IMR-90 (cell line): ENCODE measurements at regions of chr1 and their contacts with region 1.

Region 1: DNA sequence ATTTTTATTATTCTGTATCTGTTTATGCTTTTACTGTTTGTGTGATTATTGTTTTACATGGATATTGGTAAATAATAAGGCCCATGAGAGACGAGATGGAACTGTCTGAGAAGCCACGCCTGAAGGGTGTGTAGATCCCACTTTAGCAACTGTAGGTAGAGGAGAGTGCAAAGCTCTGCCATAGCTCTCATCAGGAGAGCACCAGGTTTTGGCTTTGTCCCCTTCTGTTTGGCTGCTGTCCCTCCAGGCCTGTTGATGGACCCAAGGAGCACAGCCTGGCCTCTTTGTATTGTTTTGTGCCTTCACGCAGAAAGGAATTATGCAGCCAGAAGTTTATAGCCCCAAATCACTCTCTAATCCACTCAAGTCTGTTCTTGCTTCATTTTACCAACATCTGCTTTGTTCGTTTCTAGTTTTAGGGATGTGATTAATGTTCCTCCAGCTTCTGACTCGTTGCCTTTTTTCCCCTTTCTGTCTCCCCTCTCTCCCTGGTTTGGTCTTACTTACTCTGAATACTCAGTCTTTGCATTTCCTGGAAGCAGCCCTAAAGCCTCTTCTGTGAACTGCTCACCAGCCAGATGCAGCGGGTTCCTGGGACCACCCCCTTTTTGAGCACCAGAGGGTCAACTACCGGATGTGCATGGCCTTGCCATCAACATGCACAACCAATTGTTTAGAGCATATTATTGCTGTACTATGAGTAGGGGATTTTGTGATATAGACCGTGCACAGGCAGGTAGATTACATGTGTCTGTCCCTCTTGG is 127.3 kb downstream of the HHAT start:
- DNase-seq: no peak
- ATAC-seq: no peak
- H3K4me3 ChIP-seq: no peak overlapping the region
- H3K27ac ChIP-seq: no peak overlapping the region
- H3K4me1 ChIP-seq: no peaks in the 10 kb centered on the region
- H3K27me3 ChIP-seq: peaks cover 2% of the 10 kb centered on the region; the same call in 1 of the 2 replicates
- CTCF ChIP-seq: no peak
- POLR2A ChIP-seq: no peak
- RAD21 ChIP-seq: no peak

Region 2: DNA sequence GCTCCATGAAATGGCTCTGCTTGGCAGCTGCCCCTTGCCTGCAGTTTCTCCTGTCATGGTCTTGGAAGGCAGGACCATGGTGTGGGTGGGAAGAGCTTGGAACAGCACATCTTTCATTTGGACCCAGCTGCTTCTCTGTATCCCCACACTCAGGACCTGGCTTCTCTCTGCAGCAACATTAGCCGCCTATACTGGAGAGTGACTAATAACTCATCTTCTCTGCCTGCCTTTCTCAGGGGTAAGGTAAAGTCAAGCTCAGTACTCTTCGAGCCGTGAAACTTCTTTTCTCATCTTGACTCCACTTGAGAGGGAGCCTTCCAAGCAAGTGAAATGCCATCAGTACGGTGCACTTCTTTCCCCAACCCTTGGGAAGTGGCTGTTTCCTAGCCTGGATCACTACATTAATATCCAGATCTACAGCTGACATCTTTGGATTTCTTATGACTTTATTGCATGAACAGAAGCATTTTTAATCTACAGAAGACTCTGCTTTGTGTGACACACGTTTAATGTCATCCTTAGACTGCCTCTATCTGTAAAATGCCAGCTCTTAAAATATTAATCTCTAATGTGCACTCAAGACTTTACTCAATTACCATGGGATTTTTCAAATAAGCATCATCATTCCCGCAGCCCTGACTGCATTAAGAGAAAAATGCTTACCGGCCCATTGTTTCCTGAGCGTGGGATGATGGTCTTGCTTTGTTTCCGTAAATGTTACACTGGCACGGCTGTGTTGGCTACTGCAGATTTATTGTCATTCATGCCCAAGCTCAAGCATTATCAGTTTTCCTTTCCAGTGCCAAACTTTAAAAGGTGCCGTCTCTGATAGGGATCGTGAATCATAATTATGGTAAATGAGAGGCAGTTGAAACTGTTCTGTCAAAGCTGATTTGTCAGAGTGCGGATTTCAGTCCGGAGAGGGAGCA is 115.6 kb after region 1 on chr1:
- CTCF ChIA-PET with region 1: no interaction called
- POLR2A ChIA-PET with region 1: no interaction called
- dilution Hi-C with region 1: no loop called
- in situ Hi-C with region 1: loop called (anchors 10 kb)
- intact Hi-C with region 1: no loop called
- DNase-seq: no peak
- ATAC-seq: no peak
- H3K4me3 ChIP-seq: no peak overlapping the region
- H3K27ac ChIP-seq: no peak overlapping the region
- H3K4me1 ChIP-seq: no peaks in the 10 kb centered on the region
- H3K27me3 ChIP-seq: no peaks in the 10 kb centered on the region; the same call in 1 of the 2 replicates
- CTCF ChIP-seq: no peak
- POLR2A ChIP-seq: no peak
- RAD21 ChIP-seq: no peak